Activated CD4-positive, alpha-beta T cell treated with anti-CD3 and anti-CD28 coated beads for 36 hours (primary cell): ENCODE measurements at regions of chr22 and their contacts with region 1.

Region 1: DNA sequence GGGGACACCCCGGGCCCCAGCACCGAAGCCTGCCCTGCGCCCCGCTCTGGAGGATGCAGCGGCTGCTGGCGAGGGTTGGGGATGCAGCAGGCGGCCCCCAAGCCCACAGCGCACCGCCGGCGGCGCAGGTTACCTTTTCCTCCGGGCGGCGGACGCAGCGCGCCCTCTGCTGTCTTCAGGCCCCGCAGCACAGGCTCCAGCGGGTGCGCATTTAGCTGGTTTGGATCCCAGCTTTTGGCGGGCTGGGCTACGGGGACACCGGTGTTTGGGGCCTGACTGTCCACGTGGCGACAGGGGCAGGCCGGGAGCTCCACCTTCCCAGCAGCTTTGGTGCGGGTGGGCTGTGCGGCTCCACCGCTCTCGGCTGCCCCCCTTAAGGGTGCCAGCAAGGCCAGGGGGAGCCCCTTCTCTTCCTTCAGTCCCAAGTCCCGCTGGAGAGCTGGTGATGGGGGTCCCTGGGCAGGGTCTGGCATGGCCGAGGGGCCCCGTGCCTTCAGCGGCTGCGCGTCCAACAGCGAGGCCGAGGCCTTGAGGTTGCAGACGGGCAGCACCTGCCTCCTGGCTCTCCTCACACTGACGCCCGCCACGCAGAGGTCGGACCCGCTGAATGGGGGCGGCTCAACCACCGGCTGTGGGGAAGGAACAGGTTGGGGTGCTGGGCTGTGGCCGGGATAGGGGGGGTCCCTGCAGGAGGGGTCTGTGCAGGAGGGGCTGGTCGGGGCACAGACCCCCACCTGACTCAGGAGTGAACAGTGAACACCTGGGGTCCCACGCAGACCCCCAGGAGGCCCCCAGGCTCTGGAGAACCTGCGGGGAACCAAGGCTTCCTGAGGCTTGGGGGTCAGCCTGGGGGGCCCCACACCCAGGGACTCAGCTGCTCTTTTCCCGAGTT is 18.0 kb upstream of the IL17REL start:
- DNase-seq: peak; percentile 95
- ATAC-seq: peak; percentile 93
- H3K4me3 Mint-ChIP-seq: no peak overlapping the region
- H3K27ac Mint-ChIP-seq: no peak overlapping the region
- H3K4me1 Mint-ChIP-seq: peaks cover 22% of the 10 kb centered on the region
- H3K27me3 Mint-ChIP-seq: peaks cover 7% of the 10 kb centered on the region

Region 2: GRCh38 chr22:49925525-49926128 is 104.9 kb before region 1 on chr22:
- CTCF ChIA-PET with region 1: interaction called, 35 read pairs
- POLR2A ChIA-PET with region 1: interaction called, 3 read pairs
- intact Hi-C with region 1: loop called in 1 of 2 experiments (anchors 1 kb)
- DNase-seq: peak; percentile 78
- ATAC-seq: peak; percentile 70
- H3K4me3 Mint-ChIP-seq: peak overlapping the region; percentile 74
- H3K27ac Mint-ChIP-seq: peak overlapping the region; percentile 90
- H3K4me1 Mint-ChIP-seq: peaks cover 26% of the 10 kb centered on the region
- H3K27me3 Mint-ChIP-seq: no peaks in the 10 kb centered on the region

Region 3: GRCh38 chr22:49930739-49931412 is 99.7 kb before region 1 on chr22:
- CTCF ChIA-PET with region 1: interaction called, 35 read pairs
- POLR2A ChIA-PET with region 1: interaction called, 3 read pairs
- intact Hi-C with region 1: loop called (anchors 1 kb)
- DNase-seq: peak; percentile 77
- ATAC-seq: peak; percentile 47
- H3K4me3 Mint-ChIP-seq: peak overlapping the region; percentile 22
- H3K27ac Mint-ChIP-seq: peak overlapping the region; percentile 34
- H3K4me1 Mint-ChIP-seq: peaks cover 43% of the 10 kb centered on the region
- H3K27me3 Mint-ChIP-seq: no peaks in the 10 kb centered on the region

Region 4: DNA sequence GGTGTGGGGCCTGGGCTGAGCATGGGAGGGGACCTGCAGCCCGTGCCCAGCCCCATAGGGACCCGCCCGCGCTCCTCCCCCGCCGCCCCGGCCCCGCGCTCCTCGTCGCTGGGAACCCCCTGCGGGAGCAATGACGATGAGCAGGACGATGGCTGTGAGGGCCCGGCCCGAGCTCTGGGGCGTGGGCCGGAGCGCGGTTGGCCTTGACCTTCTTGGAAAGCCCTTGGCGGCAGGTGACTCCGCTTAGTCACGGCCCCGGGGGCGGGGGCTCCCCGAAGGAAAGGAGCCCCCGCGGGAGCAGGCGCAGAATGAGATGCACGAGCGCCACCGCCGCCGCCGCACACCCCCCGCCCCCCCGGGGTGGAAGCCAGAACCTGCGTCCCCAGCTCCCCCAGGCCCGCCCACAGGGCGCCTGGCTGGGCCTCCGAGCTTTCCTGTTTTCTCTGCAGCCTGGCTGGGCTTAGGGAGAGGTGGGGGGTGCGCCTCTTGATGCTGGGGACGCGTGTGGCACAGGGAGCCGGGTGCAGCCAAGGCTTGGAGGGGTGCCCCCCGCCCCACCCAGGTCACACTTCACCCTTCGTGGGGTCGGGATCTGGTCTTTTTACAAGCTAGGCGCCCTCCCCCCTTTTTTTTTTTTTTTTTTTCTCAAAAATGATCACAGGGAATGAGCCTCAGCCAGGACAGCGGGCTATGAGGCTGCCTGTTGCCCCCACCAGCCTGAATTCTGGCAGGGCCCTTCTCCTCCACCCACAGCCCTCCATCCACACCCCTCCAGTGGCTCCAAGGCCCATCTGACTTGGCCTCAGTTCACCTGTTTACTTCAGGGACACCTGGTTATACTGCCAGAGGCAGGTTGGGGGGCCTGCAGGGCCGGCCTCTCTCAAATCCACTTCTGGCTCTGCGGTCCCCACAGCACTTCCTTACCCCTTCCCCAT is 94.3 kb before region 1 on chr22:
- CTCF ChIA-PET with region 1: interaction called, 35 read pairs
- POLR2A ChIA-PET with region 1: no interaction called
- intact Hi-C with region 1: loop called in 1 of 2 experiments (anchors 1 kb)
- DNase-seq: peak; percentile 99
- ATAC-seq: peak; percentile 84
- H3K4me3 Mint-ChIP-seq: peak overlapping the region; percentile 64
- H3K27ac Mint-ChIP-seq: peak overlapping the region; percentile 85
- H3K4me1 Mint-ChIP-seq: peaks cover 43% of the 10 kb centered on the region
- H3K27me3 Mint-ChIP-seq: no peaks in the 10 kb centered on the region

Region 5: GRCh38 chr22:49979587-49980264 is 50.8 kb before region 1 on chr22:
- CTCF ChIA-PET with region 1: interaction called, 9 read pairs
- POLR2A ChIA-PET with region 1: interaction called, 5 read pairs
- intact Hi-C with region 1: loop called in 1 of 2 experiments (anchors 2 kb)
- DNase-seq: peak; percentile 69
- ATAC-seq: peak; percentile 13
- H3K4me3 Mint-ChIP-seq: peak overlapping the region; percentile 15
- H3K27ac Mint-ChIP-seq: peak overlapping the region; percentile 83
- H3K4me1 Mint-ChIP-seq: peaks cover 46% of the 10 kb centered on the region
- H3K27me3 Mint-ChIP-seq: peaks cover 7% of the 10 kb centered on the region

Region 6: DNA sequence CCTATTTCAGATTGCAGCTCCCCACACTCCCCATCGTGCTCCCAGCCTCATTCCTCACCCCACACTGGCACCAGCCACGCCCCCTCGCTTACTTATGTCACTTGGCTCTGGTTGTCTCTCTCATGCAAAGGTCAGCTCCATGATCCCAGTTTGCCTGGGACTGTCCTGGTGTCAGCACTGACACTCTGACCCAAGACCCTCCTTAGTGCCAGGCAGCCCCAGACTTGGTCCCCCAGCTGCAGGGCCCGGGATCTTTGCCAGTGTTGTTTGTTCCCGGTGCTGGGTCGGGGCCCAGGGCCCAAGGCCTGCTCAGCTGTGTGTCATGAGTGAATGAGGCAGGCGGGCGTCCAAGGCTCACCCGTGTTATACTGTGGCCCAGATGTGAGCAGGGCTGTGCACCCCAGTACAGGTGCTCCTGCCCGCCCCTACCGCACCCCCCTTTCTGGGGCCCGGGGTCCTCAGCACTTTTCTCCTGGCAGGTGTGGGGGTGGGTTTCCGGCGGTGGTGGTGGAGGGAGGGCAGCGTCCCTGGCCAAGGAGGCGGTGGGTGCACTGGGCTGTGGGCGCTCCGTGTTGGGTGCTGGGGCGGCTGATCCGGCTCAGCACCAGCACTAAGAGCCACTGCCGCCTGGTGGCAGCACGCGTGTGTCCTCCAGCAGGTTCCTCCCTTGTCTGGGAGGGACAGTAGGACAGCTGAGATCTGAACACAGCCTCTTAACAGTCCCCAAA is 37.5 kb before region 1 on chr22:
- CTCF ChIA-PET with region 1: interaction called, 7 read pairs
- POLR2A ChIA-PET with region 1: no interaction called
- intact Hi-C with region 1: loop called (anchors 1 to 2 kb)
- DNase-seq: peak; percentile 87
- ATAC-seq: peak; percentile 98
- H3K4me3 Mint-ChIP-seq: no peak overlapping the region
- H3K27ac Mint-ChIP-seq: peak overlapping the region; percentile 53
- H3K4me1 Mint-ChIP-seq: peaks cover 5% of the 10 kb centered on the region
- H3K27me3 Mint-ChIP-seq: no peaks in the 10 kb centered on the region